ENCODE measurements at regions of chr1 and their contacts with region 1.

Region 1: DNA sequence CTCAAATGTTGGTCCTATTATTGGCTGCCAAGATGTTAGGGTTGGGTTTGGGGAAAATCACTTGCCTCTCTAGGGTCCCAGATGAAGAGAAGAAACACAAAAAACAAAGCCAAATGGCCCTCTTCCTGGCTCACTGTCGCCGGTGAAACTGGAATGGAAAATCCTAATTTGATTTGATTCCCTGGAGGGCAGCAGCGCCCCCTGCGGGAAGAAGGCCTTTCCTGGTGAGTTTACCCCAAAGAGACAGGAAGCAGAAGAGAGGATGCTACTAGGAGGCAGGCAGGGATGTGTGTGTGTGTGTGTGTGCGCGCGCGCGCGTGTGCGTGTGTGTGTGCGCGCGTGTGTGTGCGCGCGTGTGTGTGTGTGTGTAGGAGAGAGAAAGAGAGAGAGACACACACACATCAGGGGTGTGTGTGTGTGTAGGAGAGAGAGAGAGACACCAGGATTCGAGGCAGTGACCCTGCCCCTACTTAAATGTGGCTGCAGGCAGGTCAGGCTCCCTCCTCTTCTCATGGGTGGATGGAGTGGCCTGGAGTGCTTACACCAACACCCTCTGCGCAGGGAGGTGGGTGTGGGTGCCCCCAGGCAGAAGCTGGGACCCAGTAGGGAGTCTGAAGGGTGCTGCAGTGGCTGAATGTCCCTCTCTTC is 3.1 kb upstream of the SELENON start:
- DNase-seq: peak; percentile 96
- H3K4me3 Mint-ChIP-seq: peak overlapping the region; percentile 76
- H3K27ac Mint-ChIP-seq: peak overlapping the region; percentile 75
- H3K4me1 Mint-ChIP-seq: peaks cover 58% of the 10 kb centered on the region
- H3K27me3 Mint-ChIP-seq: no peaks in the 10 kb centered on the region

Region 2: GRCh38 chr1:25608488-25609178 is 188.3 kb before region 1 on chr1:
- CTCF ChIA-PET with region 1: interaction called, 46 read pairs
- intact Hi-C with region 1: loop called (anchors 1 kb)
- DNase-seq: peak; percentile 96
- H3K4me3 Mint-ChIP-seq: no peak overlapping the region
- H3K27ac Mint-ChIP-seq: no peak overlapping the region
- H3K4me1 Mint-ChIP-seq: peaks cover 11% of the 10 kb centered on the region
- H3K27me3 Mint-ChIP-seq: no peaks in the 10 kb centered on the region

Region 3: GRCh38 chr1:25695090-25695770 is 101.7 kb before region 1 on chr1:
- CTCF ChIA-PET with region 1: interaction called, 3 read pairs
- intact Hi-C with region 1: loop called (anchors 5 kb)
- DNase-seq: no peak
- H3K4me3 Mint-ChIP-seq: peak overlapping the region; percentile 50
- H3K27ac Mint-ChIP-seq: peak overlapping the region; percentile 59
- H3K4me1 Mint-ChIP-seq: peaks cover 50% of the 10 kb centered on the region
- H3K27me3 Mint-ChIP-seq: no peaks in the 10 kb centered on the region

Region 4: GRCh38 chr1:25754470-25755181 is 42.3 kb before region 1 on chr1:
- CTCF ChIA-PET with region 1: interaction called, 7 read pairs
- intact Hi-C with region 1: loop called (anchors 1 kb)
- DNase-seq: peak; percentile 70
- H3K4me3 Mint-ChIP-seq: peak overlapping the region; percentile 20
- H3K27ac Mint-ChIP-seq: peak overlapping the region; percentile 76
- H3K4me1 Mint-ChIP-seq: peaks cover 43% of the 10 kb centered on the region
- H3K27me3 Mint-ChIP-seq: no peaks in the 10 kb centered on the region